ENCODE measurements at regions of chrX and their contacts with region 1.

Region 1: GRCh38 chrX:119516157-119516702 is 48.0 kb downstream of the SLC25A5 start:
- DNase-seq: peak; percentile 23
- H3K4me3 ChIP-seq: no peak overlapping the region
- H3K27ac ChIP-seq: no peak overlapping the region
- H3K4me1 ChIP-seq: peaks cover 0 to 3% (median 0%) of the 10 kb centered on the region in 4 donors
- H3K27me3 ChIP-seq: no peaks in the 10 kb centered on the region
- CTCF ChIP-seq: peak; percentile 59 to 83 (median 73)
- EP300 ChIP-seq: no peak
- POLR2A ChIP-seq: no peak

Region 2: DNA sequence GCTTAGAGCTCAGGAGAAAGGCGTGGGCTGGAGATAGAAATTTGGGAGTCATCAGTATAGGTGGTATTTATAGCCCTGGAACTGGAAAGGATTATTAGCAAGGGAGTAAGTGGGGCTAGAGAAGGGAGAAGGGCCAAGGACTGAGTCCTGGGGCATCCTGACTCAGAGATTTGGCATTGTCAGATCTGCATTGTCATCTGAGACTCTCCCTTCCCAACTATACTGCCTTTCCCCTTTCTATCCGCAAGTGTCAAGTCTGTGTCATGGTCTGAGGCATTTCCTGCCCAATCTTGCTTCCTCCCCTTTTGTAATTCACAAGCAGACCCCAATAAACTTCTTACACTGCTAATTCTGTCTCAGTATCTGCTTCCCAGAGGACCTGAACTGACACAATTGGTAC is 141.5 kb before region 1 on chrX:
- in situ Hi-C with region 1: no loop called
- intact Hi-C with region 1: no loop called
- DNase-seq: no peak
- H3K4me3 ChIP-seq: no peak overlapping the region
- H3K27ac ChIP-seq: no peak overlapping the region
- H3K4me1 ChIP-seq: no peaks in the 10 kb centered on the region
- H3K27me3 ChIP-seq: no peaks in the 10 kb centered on the region
- CTCF ChIP-seq: no peak
- EP300 ChIP-seq: no peak
- POLR2A ChIP-seq: no peak

Region 3: GRCh38 chrX:119729408-119730201 is 213.4 kb after region 1 on chrX:
- in situ Hi-C with region 1: loop called in 2 of 4 experiments (anchors 10 to 25 kb)
- intact Hi-C with region 1: no loop called
- DNase-seq: peak; percentile 64
- H3K4me3 ChIP-seq: no peak overlapping the region
- H3K27ac ChIP-seq: no peak overlapping the region
- H3K4me1 ChIP-seq: no peaks in the 10 kb centered on the region
- H3K27me3 ChIP-seq: no peaks in the 10 kb centered on the region
- CTCF ChIP-seq: peak; percentile 42 to 65 (median 49)
- EP300 ChIP-seq: no peak
- POLR2A ChIP-seq: no peak

Measured in transverse colon (tissue), 4 donors.